Dendritic cell treated with granulocyte-macrophage colony-stimulating factor and Interleukin-4, amounts not matched to agents 40 ng/mL and 50 ng/mL, for 4 days (primary cell): ENCODE measurements at regions of chr17 and their contacts with region 1.

Region 1: DNA sequence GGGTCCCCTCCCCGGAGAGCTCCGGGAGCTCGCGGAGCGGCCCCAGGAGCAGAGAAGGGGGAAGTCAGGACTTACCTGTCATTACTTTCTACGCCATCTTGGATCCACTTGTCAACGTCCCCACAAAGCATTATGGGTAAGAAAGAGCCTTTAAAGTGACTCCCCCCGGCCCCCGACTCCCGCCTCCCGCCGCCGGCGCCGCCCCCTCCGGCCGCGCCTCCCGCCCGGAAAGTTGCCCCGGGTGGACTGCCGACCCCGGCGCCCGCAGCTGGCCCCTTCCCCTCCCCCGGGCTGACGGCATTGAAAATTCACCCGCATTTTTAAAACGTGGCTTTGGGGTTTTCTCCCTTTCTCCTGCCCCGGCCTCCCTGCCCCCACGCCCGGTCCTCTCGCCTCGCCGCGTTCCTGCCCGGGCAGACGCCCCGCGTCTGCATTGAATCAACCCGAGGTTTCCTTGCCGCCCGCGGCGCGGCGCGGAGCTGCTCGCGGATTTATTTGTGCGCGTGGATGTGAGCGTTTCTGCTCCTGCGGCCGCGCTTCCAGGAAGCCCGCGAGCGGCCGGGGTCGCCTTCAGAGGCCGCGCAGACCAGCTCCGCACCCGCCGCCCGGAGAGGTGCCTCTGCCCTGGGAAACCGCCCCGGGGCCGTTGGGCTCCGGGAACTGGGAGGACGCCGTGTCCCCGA is at the start of gene HELZ:
- H3K4me3 Mint-ChIP-seq: peak within 1 kb of the TSS; percentile 87
- H3K27ac Mint-ChIP-seq: peak within 1 kb of the TSS; percentile 86
- H3K4me1 Mint-ChIP-seq: peaks cover 50% of the 10 kb centered on the region
- H3K27me3 Mint-ChIP-seq: peaks cover 6% of the 10 kb centered on the region

Region 2: GRCh38 chr17:67343251-67343650 is 98.0 kb after region 1 on chr17:
- intact Hi-C with region 1: loop called (anchors 10 kb)
- H3K4me3 Mint-ChIP-seq: no peak overlapping the region
- H3K27ac Mint-ChIP-seq: no peak overlapping the region
- H3K4me1 Mint-ChIP-seq: no peaks in the 10 kb centered on the region
- H3K27me3 Mint-ChIP-seq: no peaks in the 10 kb centered on the region